Gastrocnemius medialis (tissue), 4 donors: ENCODE measurements at regions of chr19 and their contacts with region 1.

Region 1: GRCh38 chr19:46487802-46488445 is 7.7 kb downstream of the PNMA8B start:
- DNase-seq: peak; percentile 45 to 51
- ATAC-seq: peak; percentile 71 to 75
- H3K4me3 ChIP-seq: peak overlapping the region; percentile 2 to 46 (median 26)
- H3K27ac ChIP-seq: no peak overlapping the region
- H3K4me1 ChIP-seq: peaks cover 0 to 15% of the 10 kb centered on the region in 2 donors
- H3K27me3 ChIP-seq: peaks cover 29 to 51% (median 39%) of the 10 kb centered on the region in 3 donors
- CTCF ChIP-seq: peak; percentile 81 to 91 (median 85)
- POLR2A ChIP-seq: no peak

Region 2: DNA sequence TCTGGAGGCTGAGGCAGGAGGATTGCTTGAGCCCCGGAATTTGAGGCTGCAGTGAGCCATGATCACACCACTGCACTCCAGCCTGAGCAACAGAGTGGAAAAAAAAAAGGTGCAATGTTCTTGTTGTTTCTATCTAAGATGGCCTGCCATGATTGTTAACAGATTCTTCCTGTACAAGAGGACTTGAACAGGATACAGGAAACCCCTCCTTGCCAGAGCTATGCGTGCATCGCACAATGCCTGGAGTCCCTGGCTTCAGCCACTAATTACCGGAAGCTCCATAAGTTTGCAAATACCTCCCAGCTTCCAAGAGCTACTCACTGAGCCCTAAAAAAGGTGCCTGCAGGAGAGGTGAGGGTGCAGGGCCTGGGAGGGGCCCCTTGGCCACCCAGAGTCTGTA is 204.2 kb before region 1 on chr19:
- in situ Hi-C with region 1: loop called in 2 of 4 experiments (anchors 10 to 25 kb)
- intact Hi-C with region 1: loop called (anchors 1 kb)
- DNase-seq: no peak
- ATAC-seq: peak; percentile 64 to 76
- H3K4me3 ChIP-seq: no peak overlapping the region
- H3K27ac ChIP-seq: peak overlapping the region; percentile 18 to 70 (median 63)
- H3K4me1 ChIP-seq: no peaks in the 10 kb centered on the region
- H3K27me3 ChIP-seq: no peaks in the 10 kb centered on the region
- CTCF ChIP-seq: no peak
- POLR2A ChIP-seq: no peak

Region 3: DNA sequence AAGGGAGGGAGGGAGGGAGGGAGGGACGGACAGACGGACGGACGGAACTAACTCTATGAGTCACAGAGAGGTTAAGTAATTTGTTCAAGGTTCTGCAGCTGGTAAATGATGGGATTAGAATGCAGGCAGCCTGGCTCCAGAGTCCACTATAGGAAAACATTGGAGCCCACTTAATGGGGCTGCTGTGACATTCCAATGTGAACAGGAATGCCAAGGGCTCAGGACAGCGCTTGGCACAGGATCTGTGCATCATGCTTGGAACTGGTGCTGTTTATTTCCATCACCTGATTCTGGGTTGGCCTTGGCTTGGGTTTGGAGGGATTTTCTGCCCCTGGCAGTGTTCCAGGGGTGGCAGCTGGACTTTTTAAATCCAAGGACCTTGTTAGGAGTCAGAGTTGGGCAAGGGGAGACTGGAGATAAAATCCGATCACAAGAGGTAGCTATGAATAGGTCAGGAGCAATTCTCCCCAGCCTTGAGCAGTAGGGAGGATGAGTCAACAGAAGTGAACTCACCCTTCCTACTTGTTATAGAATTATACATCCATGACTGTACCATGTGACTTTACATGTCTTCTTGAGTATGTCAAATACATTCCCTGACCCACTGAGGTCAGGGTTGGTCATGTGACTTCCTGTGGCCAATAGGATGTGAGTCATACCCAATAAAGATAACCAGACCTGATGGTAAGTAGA is 198.9 kb before region 1 on chr19:
- in situ Hi-C with region 1: loop called in 2 of 4 experiments (anchors 10 to 25 kb)
- intact Hi-C with region 1: no loop called
- DNase-seq: no peak
- ATAC-seq: peak; percentile 27 to 63
- H3K4me3 ChIP-seq: no peak overlapping the region
- H3K27ac ChIP-seq: peak overlapping the region; percentile 41 to 67 (median 48)
- H3K4me1 ChIP-seq: no peaks in the 10 kb centered on the region
- H3K27me3 ChIP-seq: no peaks in the 10 kb centered on the region
- CTCF ChIP-seq: no peak
- POLR2A ChIP-seq: no peak

Region 4: DNA sequence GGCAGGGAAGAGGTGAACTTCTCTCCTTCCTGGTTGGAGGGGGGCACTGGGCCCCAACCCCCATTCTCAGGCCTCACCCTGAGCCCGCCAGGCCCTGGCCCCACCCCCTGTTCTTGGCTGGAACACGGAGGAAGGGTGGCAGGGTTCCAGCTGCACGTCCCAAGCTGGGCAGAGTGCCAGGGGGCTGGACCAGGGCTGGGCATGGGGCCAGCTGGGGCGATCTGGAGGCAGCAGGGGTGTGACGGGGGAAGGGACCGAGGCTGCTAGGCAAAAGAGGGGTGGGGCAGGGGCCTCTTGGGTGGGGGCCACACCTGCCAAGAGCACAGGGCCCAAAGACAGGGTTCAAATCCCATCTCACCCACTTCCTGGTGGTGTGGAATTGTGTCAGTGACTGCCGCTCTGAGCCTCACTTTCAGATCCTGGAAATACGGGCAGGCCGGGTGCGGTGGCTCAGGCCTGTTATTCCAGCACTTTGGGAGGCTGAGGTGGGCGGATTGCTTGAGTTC is 188.9 kb before region 1 on chr19:
- in situ Hi-C with region 1: loop called in 1 of 4 experiments (anchors 25 kb)
- intact Hi-C with region 1: no loop called
- DNase-seq: peak; percentile 77
- ATAC-seq: peak; percentile 50 to 57
- H3K4me3 ChIP-seq: peak overlapping the region; percentile 54 to 63 (median 60)
- H3K27ac ChIP-seq: peak overlapping the region; percentile 77 to 89 (median 84)
- H3K4me1 ChIP-seq: peaks cover 14 to 17% of the 10 kb centered on the region in 2 donors
- H3K27me3 ChIP-seq: peaks cover 8 to 22% (median 21%) of the 10 kb centered on the region in 3 donors
- CTCF ChIP-seq: no peak
- POLR2A ChIP-seq: no peak

Region 5: GRCh38 chr19:46392243-46392801 is 95.6 kb before region 1 on chr19:
- in situ Hi-C with region 1: loop called in 1 of 4 experiments (anchors 5 kb)
- intact Hi-C with region 1: loop called (anchors 2 kb)
- DNase-seq: no peak
- ATAC-seq: no peak
- H3K4me3 ChIP-seq: no peak overlapping the region
- H3K27ac ChIP-seq: no peak overlapping the region
- H3K4me1 ChIP-seq: no peaks in the 10 kb centered on the region
- H3K27me3 ChIP-seq: no peaks in the 10 kb centered on the region
- CTCF ChIP-seq: no peak
- POLR2A ChIP-seq: no peak

Region 6: DNA sequence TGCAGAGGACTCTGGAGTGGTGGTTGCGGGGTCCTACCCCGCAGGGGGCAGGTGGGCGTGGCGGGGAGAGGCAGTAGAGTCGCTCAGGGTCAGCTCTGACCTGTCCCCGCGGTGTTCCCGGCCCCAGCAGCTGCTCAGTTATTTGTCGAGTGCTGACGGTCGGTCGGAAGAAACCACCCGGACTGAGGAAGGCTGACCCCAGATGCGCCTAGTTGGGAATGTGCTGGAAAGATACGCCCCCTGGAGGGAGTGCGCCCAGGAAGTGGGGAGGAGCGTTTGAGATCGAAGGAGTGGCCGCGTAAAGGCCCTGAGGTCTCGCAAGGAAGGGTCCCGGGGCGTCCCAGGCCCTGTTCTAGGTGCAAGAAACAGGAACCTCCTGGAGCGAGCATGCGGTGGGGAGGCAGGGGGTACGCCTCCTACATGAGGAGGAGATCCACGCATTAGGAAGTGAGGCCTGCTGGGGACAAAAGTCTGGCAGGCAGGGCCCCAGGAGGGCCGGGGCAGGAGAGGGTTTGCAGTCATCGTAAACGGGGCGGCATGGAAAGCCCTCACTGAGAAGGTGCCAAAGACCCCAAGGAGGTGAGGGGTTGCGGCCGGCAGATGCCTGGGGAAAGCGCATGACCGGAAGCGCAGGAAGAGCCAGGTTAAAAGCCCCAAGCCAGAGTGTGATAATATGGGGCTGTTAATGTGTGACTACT is 83.7 kb before region 1 on chr19:
- in situ Hi-C with region 1: loop called (anchors 5 to 10 kb)
- intact Hi-C with region 1: loop called (anchors 1 kb)
- DNase-seq: no peak
- ATAC-seq: peak in 1 of 2 donors; percentile 42
- H3K4me3 ChIP-seq: peak overlapping the region; percentile 8 to 41 (median 18)
- H3K27ac ChIP-seq: peak overlapping the region in 2 of 4 donors; percentile 19 to 34
- H3K4me1 ChIP-seq: peaks cover 0 to 4% of the 10 kb centered on the region in 2 donors
- H3K27me3 ChIP-seq: peaks cover 40 to 58% (median 47%) of the 10 kb centered on the region in 3 donors
- CTCF ChIP-seq: no peak
- POLR2A ChIP-seq: no peak

Region 7: GRCh38 chr19:46513461-46514236 is 25.7 kb after region 1 on chr19:
- in situ Hi-C with region 1: no loop called
- intact Hi-C with region 1: loop called (anchors 1 kb)
- DNase-seq: peak; percentile 34 to 40
- ATAC-seq: peak; percentile 47 to 73
- H3K4me3 ChIP-seq: no peak overlapping the region
- H3K27ac ChIP-seq: no peak overlapping the region
- H3K4me1 ChIP-seq: peaks cover 0 to 3% of the 10 kb centered on the region in 2 donors
- H3K27me3 ChIP-seq: peaks cover 3 to 10% (median 7%) of the 10 kb centered on the region in 3 donors
- CTCF ChIP-seq: peak; percentile 66 to 88 (median 85)
- POLR2A ChIP-seq: no peak